CD8-positive, alpha-beta T cell (primary cell): ENCODE measurements at regions of chr2 and their contacts with region 1.

Region 1: DNA sequence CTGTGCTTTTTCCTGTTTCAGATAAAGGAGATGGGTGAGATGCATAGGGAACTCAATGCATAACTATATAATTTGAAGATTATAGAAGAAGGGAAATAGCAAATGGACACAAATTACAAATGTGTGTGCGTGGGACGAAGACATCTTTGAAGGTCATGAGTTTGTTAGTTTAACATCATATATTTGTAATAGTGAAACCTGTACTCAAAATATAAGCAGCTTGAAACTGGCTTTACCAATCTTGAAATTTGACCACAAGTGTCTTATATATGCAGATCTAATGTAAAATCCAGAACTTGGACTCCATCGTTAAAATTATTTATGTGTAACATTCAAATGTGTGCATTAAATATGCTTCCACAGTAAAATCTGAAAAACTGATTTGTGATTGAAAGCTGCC is 16.4 kb upstream of the MSH2 start:
- DNase-seq: no peak
- ATAC-seq: no peak
- H3K4me3 ChIP-seq: no peak overlapping the region
- H3K4me3 Mint-ChIP-seq: no peak overlapping the region
- H3K27ac ChIP-seq: no peak overlapping the region
- H3K27ac Mint-ChIP-seq: no peak overlapping the region
- H3K4me1 ChIP-seq: no peaks in the 10 kb centered on the region
- H3K4me1 Mint-ChIP-seq: no peaks in the 10 kb centered on the region
- H3K27me3 ChIP-seq: no peaks in the 10 kb centered on the region
- H3K27me3 Mint-ChIP-seq: peaks cover 10% of the 10 kb centered on the region
- CTCF ChIP-seq: no peak

Region 2: GRCh38 chr2:47336259-47337238 is 50.0 kb before region 1 on chr2:
- CTCF ChIA-PET with region 1: interaction called, 17 read pairs
- POLR2A ChIA-PET with region 1: interaction called, 3 read pairs
- intact Hi-C with region 1: loop called (anchors 1 to 2 kb)
- DNase-seq: no peak
- ATAC-seq: no peak
- H3K4me3 ChIP-seq: no peak overlapping the region
- H3K4me3 Mint-ChIP-seq: no peak overlapping the region
- H3K27ac ChIP-seq: no peak overlapping the region
- H3K27ac Mint-ChIP-seq: no peak overlapping the region
- H3K4me1 ChIP-seq: no peaks in the 10 kb centered on the region
- H3K4me1 Mint-ChIP-seq: no peaks in the 10 kb centered on the region
- H3K27me3 ChIP-seq: no peaks in the 10 kb centered on the region
- H3K27me3 Mint-ChIP-seq: peaks cover 7% of the 10 kb centered on the region
- CTCF ChIP-seq: no peak